ENCODE measurements at regions of chr12 and their contacts with region 1.

Region 1: DNA sequence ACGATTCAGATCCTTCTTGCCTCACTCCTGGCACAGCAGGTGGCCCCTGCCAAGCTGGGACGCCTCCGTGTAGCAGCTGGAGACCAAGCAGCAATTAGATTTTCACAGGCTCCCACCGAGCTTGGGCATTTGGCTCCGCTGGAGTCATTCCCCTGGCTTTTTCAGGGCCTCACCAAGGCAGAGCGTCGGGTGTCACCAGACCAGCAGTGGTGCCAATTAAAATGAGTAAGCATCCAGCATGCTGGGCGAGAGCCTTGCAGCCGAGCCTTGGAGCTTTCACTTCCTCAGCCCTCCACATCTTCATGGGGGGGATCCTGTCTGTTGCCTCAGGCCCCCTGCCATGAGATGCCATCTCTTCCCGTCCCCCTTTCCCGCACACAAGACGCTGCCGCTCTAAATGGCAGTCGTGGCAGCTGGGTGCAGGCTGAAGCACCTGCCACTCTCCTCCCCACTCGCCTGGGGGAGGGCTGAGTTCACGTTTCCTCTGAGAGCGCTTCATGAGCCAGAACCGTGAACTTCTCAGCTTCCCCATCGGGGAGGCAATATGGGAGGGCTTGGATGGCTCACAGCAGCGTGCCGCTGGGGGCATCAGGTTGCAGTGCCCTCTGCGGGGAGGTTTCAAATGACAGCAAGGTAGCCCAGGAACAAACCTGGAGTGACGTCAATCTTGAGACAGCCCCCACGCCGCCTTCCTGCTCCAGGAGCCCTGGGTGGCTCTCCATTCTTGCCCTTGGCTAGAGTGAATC is 11.7 kb downstream of the TPCN1 start:
- DNase-seq: peak; percentile 83
- H3K4me3 Mint-ChIP-seq: peak overlapping the region; percentile 66
- H3K27ac Mint-ChIP-seq: peak overlapping the region; percentile 88
- H3K4me1 Mint-ChIP-seq: peaks cover 70% of the 10 kb centered on the region
- H3K27me3 Mint-ChIP-seq: no peaks in the 10 kb centered on the region

Region 2: DNA sequence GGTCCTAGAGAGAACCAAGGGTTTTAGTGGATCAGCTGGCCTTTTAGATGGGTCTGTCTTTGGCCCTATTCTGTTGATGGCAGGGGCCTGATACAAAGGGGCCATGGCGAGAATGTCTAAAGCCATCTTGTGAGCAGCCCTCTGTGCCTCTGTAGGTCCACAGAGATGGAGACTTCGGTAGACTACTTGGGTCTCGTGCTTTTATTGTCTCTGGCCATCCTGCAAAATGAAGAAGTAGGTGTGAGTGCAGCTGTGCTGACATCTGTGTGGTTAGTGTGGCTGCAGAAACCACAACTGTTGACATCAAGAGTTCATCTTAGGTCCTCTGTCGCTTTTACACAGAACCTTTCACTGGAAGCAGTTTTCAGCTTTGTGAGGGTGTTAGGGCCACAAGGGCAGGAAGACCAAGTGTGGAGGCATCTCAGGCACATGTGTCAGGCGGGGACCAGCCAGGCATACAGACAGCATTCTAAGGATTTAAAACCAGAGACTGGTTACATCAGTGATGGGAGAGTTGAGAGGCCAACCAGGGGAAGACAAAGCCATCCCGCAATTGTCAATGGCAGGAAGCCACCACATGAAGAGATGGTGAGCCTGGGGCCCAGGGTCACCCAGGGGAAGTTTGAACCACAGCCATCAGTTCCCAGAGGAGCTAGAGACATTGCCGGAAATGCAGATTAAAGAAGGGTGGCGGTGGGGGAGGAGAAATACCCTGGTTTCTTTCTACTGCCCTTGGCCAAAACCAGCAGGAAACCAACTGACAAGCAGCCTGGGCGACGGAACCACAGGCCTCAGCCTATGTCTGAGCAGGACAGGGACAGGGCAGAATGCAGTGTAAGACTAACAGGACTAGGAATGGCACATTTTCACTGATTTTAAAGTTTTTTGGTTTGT is 24.7 kb before region 1 on chr12:
- CTCF ChIA-PET with region 1: interaction called, 4 read pairs
- intact Hi-C with region 1: loop called (anchors 1 kb)
- DNase-seq: peak; percentile 89
- H3K4me3 Mint-ChIP-seq: peak overlapping the region; percentile 34
- H3K27ac Mint-ChIP-seq: peak overlapping the region; percentile 95
- H3K4me1 Mint-ChIP-seq: peaks cover 41% of the 10 kb centered on the region
- H3K27me3 Mint-ChIP-seq: no peaks in the 10 kb centered on the region

Region 3: DNA sequence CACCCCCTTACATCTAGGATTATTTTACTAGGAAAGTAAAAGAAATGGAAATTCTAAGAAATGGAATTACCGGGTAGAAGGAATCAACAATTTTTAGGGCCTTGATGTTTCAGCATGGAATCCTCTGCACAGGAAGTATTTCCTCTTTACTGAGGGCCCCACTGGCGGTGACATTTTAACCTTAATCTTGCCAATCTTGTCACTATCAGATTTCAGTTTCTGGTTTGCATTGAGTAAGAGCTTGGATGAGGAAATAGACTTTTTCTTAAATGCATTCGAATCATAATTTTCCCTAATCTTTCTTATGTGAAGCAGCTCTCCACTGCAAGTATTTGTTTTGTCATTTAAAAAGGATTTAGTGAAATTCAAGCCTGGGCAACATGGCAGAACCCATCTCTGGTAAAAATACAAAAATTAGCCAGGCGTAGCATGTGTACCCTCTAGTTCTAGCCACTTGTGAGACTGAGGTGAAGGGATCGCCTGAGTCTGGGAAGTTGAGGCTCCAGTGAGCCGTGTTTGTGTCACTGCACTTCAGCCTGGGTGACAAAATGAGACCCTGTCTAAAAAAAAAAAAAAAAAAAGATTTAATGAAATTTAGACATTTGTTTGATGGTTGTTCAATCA is 28.9 kb after region 1 on chr12:
- CTCF ChIA-PET with region 1: interaction called, 5 read pairs
- intact Hi-C with region 1: loop called (anchors 1 kb)
- DNase-seq: peak; percentile 79
- H3K4me3 Mint-ChIP-seq: peak overlapping the region; percentile 18
- H3K27ac Mint-ChIP-seq: peak overlapping the region; percentile 79
- H3K4me1 Mint-ChIP-seq: peaks cover 53% of the 10 kb centered on the region
- H3K27me3 Mint-ChIP-seq: no peaks in the 10 kb centered on the region

Region 4: DNA sequence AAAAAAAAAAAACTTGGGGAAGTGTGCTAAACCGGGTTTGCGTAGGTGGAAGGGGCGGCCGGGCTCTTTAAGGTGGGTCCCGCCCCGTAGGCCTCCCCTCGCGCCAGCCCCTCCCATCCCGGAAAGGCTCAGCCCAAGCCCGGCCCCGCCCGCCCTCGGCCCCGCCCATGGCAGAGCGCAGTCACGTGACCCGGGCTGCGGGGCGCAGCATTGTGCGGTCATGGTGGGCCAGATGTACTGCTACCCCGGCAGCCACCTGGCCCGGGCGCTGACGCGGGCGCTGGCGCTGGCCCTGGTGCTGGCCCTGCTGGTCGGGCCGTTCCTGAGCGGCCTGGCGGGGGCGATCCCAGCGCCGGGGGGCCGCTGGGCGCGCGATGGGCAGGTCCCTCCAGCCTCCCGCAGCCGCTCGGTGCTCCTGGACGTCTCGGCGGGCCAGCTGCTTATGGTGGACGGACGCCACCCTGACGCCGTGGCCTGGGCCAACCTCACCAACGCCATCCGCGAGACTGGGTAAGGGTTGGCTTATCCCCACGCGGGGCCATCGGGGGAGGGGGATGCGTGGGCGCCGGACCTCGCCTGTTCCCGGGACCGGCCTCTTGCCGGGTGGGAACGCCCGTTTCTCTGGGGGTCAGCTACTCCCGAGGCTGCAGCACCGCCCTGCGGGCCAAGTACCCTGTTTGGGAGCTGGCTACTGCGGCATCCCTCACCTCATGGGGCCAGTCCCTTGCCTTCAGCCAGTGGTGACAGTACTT is 125.5 kb after region 1 on chr12 and contains the start of gene PLBD2:
- CTCF ChIA-PET with region 1: no interaction called
- intact Hi-C with region 1: loop called (anchors 1 kb)
- DNase-seq: peak; percentile 96
- H3K4me3 Mint-ChIP-seq: peak within 1 kb of the TSS; percentile 84
- H3K27ac Mint-ChIP-seq: peak within 1 kb of the TSS; percentile 88
- H3K4me1 Mint-ChIP-seq: peaks cover 17% of the 10 kb centered on the region
- H3K27me3 Mint-ChIP-seq: no peaks in the 10 kb centered on the region
- total RNA-seq, gene PLBD2: 13.9 to 14.1 TPM

Measured in activated naive CD4-positive, alpha-beta T cell treated with anti-CD3 and anti-CD28 coated beads for 36 hours (primary cell).